Transverse colon (tissue), 4 donors: ENCODE measurements at regions of chr11 and their contacts with region 1.

Region 1: DNA sequence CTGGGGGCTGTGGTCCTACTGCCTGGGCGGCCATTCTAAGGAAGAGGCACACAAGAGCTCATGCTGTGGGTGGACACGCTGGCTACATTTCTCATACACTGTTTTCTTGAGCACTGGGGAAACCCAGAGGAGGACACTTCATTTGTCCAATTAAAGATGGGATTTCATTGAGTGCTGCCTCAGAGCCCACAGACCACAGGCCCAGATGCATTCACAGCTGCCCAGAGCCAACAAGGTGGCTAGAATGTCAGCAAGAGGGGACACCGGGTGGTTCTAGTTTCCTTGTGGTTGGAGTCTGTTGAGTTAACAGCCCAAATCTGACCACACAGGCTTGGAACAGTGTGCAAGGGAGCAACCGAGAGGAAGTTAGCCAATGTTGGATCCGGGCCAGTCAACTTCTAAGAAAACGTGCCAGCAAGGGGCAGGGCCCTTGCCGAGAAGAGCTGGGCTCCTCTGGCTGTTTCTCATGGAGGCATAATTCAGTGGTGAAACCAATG is 35.0 kb upstream of the SORL1 start:
- DNase-seq: peak; percentile 88
- H3K4me3 ChIP-seq: no peak overlapping the region
- H3K27ac ChIP-seq: peak overlapping the region; percentile 59 to 88 (median 72)
- H3K4me1 ChIP-seq: peaks cover 13 to 43% (median 22%) of the 10 kb centered on the region in 4 donors
- H3K27me3 ChIP-seq: no peaks in the 10 kb centered on the region
- CTCF ChIP-seq: no peak
- EP300 ChIP-seq: no peak
- POLR2A ChIP-seq: no peak

Region 2: DNA sequence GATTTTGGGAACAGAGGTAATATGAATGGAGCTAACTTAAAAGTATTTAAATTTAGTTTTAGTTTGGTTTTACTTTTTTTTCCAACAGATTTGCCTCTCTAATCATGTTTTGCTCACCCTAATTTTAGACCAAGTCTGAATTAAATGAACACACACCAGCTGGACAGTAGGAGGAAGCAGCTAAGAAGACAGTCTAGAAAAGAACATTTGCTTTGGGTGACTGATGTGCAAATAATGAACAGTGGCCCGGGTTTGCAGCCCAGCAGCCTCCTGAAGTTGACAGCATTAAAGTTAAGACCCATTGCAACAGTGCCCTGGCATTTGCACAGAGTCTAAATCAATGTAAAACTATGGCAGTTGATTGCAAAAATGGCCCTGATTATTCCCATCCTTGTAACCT is 31.4 kb before region 1 on chr11:
- in situ Hi-C with region 1: no loop called
- intact Hi-C with region 1: loop called (anchors 2 kb)
- DNase-seq: no peak
- H3K4me3 ChIP-seq: no peak overlapping the region
- H3K27ac ChIP-seq: no peak overlapping the region
- H3K4me1 ChIP-seq: peaks cover 0 to 4% (median 0%) of the 10 kb centered on the region in 4 donors
- H3K27me3 ChIP-seq: no peaks in the 10 kb centered on the region
- CTCF ChIP-seq: no peak
- EP300 ChIP-seq: no peak
- POLR2A ChIP-seq: no peak